ENCODE measurements at regions of chr12 and their contacts with region 1.

Region 1: GRCh38 chr12:69900720-69901131 is 75.7 kb downstream of the MYRFL start:
- DNase-seq: peak; percentile 49 to 74
- ATAC-seq: peak; percentile 56 to 67 (median 64)
- H3K4me3 ChIP-seq: no peak overlapping the region
- H3K4me3 Mint-ChIP-seq: no peak overlapping the region
- H3K27ac ChIP-seq: no peak overlapping the region
- H3K27ac Mint-ChIP-seq: no peak overlapping the region
- H3K4me1 ChIP-seq: no peaks in the 10 kb centered on the region
- H3K4me1 Mint-ChIP-seq: peaks cover 6 to 7% of the 10 kb centered on the region in 2 donors
- H3K27me3 ChIP-seq: no peaks in the 10 kb centered on the region
- H3K27me3 Mint-ChIP-seq: no peaks in the 10 kb centered on the region
- CTCF ChIP-seq: peak; percentile 87

Region 2: DNA sequence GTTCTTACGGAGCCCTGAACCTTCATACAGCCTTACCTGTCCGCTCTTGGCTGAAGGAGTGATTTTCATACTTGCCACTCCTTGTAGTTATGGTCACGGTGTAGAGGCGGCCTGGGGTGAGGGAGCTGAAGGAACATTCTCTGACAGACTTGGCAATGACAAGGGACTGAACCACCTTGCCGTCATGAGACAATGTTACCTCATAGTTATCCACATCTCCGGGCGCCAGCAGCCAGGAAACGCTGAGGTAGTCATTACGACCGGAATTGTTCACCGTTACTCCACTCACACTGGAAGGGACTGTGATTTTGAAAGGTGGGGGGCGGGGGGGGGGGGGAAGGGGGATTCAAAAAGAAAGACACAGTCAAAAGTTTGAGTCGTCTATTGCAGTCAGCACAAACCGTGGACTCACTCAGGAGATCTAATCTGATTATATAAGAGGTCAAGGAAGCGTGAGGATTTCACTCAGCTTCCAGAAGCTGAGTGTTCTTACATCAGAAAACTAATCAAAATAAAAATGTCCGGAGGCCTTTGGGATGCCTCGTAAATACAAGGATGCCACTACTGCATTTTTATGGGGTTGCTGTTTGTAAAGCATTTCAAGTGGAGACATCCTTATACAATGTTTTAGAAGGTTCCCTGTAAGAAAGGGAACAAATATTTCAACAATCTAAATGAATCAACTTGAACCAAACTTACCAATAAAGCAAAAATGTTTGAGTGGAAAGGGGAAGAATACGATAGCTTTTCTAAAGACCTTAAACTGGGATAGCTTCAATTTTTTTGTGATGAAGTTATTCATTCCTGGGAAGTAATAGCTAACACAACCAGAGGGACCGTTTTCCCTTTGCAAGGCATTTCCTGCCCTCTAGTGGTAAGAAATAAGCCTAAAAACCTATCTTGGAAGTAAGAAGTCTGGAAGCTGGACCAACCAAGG is 675.9 kb after region 1 on chr12:
- intact Hi-C with region 1: loop called (anchors 1 kb)
- DNase-seq: peak in 1 of 2 donors; percentile 66
- ATAC-seq: peak in 1 of 3 donors; percentile 52
- H3K4me3 ChIP-seq: no peak overlapping the region
- H3K4me3 Mint-ChIP-seq: no peak overlapping the region
- H3K27ac ChIP-seq: no peak overlapping the region
- H3K27ac Mint-ChIP-seq: no peak overlapping the region
- H3K4me1 ChIP-seq: no peaks in the 10 kb centered on the region
- H3K4me1 Mint-ChIP-seq: no peaks in the 10 kb centered on the region
- H3K27me3 ChIP-seq: no peaks in the 10 kb centered on the region
- H3K27me3 Mint-ChIP-seq: no peaks in the 10 kb centered on the region
- CTCF ChIP-seq: peak; percentile 63

Measured in natural killer cell (primary cell).